ENCODE measurements at regions of chr2 and their contacts with region 1.

Region 1: DNA sequence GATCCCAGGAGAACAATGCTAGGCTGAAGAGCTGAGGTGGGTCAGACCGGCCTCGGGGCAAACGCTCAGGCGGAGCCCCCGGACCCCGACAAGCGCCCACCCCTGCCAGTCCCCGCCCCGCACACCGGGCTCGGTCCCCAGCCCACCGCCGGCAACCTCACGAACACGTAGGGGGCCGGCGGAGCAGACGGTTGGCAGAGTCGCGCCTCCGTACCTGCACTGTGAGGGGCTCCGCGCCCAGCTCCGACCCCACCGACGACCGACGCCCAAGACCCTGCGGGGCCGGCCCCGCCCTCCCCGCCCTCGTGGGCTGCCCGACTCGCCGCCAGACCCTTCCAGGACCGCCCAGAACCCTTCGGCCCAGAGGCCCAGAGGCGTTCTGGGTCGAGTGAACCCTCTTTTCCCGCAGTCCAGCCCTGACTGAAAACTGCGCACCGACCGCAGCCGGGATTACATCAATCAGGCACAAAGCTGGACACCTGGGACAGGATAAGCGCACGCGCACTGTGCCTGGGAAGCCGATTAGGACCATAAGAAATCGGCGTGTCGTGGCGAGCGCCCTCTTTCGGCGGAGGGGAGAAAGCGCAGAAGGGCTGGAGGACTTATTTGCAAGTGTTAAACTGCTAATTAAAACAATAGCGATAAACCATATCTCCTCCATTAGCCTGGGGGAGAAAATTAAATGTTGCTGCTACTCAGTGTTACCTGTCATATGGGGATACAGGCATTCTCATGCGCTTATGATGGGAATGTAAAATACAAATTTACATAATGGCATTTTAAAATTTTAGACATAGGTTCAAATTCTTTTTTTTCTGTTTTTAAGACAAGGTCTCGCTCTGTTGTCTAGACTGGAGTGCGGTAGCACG is 11.7 kb upstream of the DCTN1 start:
- DNase-seq: peak; percentile 98
- ATAC-seq: peak; percentile 78
- H3K4me3 Mint-ChIP-seq: peak overlapping the region; percentile 86
- H3K27ac Mint-ChIP-seq: peak overlapping the region; percentile 99
- H3K4me1 Mint-ChIP-seq: peaks cover 7% of the 10 kb centered on the region
- H3K27me3 Mint-ChIP-seq: no peaks in the 10 kb centered on the region

Region 2: GRCh38 chr2:74267068-74267467 is 124.7 kb before region 1 on chr2:
- CTCF ChIA-PET with region 1: interaction called, 3 read pairs
- POLR2A ChIA-PET with region 1: no interaction called
- intact Hi-C with region 1: loop called in 1 of 2 experiments (anchors 2 kb)
- DNase-seq: peak; percentile 79
- ATAC-seq: peak; percentile 100
- H3K4me3 Mint-ChIP-seq: no peak overlapping the region
- H3K27ac Mint-ChIP-seq: peak overlapping the region; percentile 83
- H3K4me1 Mint-ChIP-seq: peaks cover 9% of the 10 kb centered on the region
- H3K27me3 Mint-ChIP-seq: no peaks in the 10 kb centered on the region

Region 3: GRCh38 chr2:74379851-74380789 is 11.7 kb before region 1 on chr2 and contains the start of gene DCTN1:
- CTCF ChIA-PET with region 1: interaction called, 11 read pairs
- POLR2A ChIA-PET with region 1: no interaction called
- intact Hi-C with region 1: no loop called
- DNase-seq: peak; percentile 52
- ATAC-seq: peak; percentile 82
- H3K4me3 Mint-ChIP-seq: no peak within 1 kb of the TSS
- H3K27ac Mint-ChIP-seq: peak within 1 kb of the TSS; percentile 42
- H3K4me1 Mint-ChIP-seq: peaks cover 24% of the 10 kb centered on the region
- H3K27me3 Mint-ChIP-seq: no peaks in the 10 kb centered on the region
- total RNA-seq, gene DCTN1: 78.1 to 132 TPM

Region 4: GRCh38 chr2:74421221-74421870 is 29.5 kb after region 1 on chr2 and contains the starts of genes C2orf81 and WDR54:
- CTCF ChIA-PET with region 1: interaction called, 9 read pairs
- POLR2A ChIA-PET with region 1: no interaction called
- intact Hi-C with region 1: loop called (anchors 1 to 2 kb)
- DNase-seq: peak; percentile 97
- ATAC-seq: peak; percentile 92
- H3K4me3 Mint-ChIP-seq: peak within 1 kb of the TSS; percentile 91
- H3K27ac Mint-ChIP-seq: peak within 1 kb of the TSS; percentile 98
- H3K4me1 Mint-ChIP-seq: peaks cover 34% of the 10 kb centered on the region
- H3K27me3 Mint-ChIP-seq: no peaks in the 10 kb centered on the region
- total RNA-seq, gene C2orf81: 4.5 to 4.9 TPM
- total RNA-seq, gene WDR54: 103 to 119 TPM

Region 5: DNA sequence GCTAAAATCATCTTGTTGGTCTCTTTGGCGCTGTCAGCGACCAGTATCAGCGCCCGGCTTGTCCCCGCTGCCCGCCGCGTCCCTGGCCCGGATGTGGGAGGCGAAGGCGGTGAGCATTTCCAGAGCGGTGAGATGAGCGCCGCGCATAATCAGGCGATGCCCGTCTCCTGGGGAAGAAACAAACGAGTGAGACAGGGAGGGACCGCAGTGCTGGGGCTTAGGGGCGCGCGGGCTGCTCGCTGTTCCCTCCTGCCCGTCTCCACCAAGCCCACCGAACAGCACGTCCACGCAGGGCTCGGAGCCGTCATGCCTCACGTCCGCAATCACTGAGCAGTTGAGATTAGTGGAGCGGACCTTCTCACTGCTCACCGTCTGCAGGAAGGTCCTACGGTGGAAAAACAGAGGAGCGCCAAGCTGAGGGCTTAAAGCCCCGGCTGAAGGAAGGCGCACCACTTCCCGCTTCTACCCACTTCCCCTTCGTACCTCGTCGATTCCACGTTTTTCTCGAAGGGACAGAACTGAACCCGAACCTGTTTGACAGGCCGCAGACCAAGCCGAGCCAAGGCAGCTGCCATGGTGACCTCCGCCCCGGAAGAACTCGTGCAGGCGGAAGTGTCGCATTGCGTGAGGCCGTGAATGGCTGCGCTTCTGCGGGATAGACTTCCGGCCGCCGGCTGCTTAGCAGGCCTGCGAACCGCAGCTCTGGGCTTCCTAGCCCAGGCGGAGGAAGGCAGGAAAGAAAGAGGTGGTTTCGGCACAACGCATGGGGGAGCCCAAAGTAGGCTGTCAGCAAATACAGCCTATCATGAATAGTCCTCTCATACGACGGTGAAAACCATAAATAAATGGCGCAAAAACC is 80.5 kb after region 1 on chr2 and contains the start of gene MRPL53:
- CTCF ChIA-PET with region 1: interaction called, 3 read pairs
- POLR2A ChIA-PET with region 1: no interaction called
- intact Hi-C with region 1: loop called in 1 of 2 experiments (anchors 1 kb)
- DNase-seq: peak; percentile 97
- ATAC-seq: peak; percentile 92
- H3K4me3 Mint-ChIP-seq: peak within 1 kb of the TSS; percentile 98
- H3K27ac Mint-ChIP-seq: peak within 1 kb of the TSS; percentile 93
- H3K4me1 Mint-ChIP-seq: peaks cover 21% of the 10 kb centered on the region
- H3K27me3 Mint-ChIP-seq: no peaks in the 10 kb centered on the region
- total RNA-seq, gene MRPL53: 87.4 to 88.5 TPM

Region 6: GRCh38 chr2:74587664-74588277 is 196.0 kb after region 1 on chr2:
- CTCF ChIA-PET with region 1: interaction called, 3 read pairs
- POLR2A ChIA-PET with region 1: no interaction called
- intact Hi-C with region 1: loop called in 1 of 2 experiments (anchors 1 kb)
- DNase-seq: peak; percentile 75
- ATAC-seq: peak; percentile 62
- H3K4me3 Mint-ChIP-seq: no peak overlapping the region
- H3K27ac Mint-ChIP-seq: no peak overlapping the region
- H3K4me1 Mint-ChIP-seq: peaks cover 26% of the 10 kb centered on the region
- H3K27me3 Mint-ChIP-seq: peaks cover 3% of the 10 kb centered on the region

Region 7: GRCh38 chr2:74653985-74654882 is 262.4 kb after region 1 on chr2 and contains the start of gene SEMA4F:
- CTCF ChIA-PET with region 1: interaction called, 4 read pairs
- POLR2A ChIA-PET with region 1: no interaction called
- intact Hi-C with region 1: loop called in 1 of 2 experiments (anchors 1 kb)
- DNase-seq: peak; percentile 97
- ATAC-seq: peak; percentile 100
- H3K4me3 Mint-ChIP-seq: peak within 1 kb of the TSS; percentile 76
- H3K27ac Mint-ChIP-seq: peak within 1 kb of the TSS; percentile 49
- H3K4me1 Mint-ChIP-seq: peaks cover 13% of the 10 kb centered on the region
- H3K27me3 Mint-ChIP-seq: peaks cover 7% of the 10 kb centered on the region
- total RNA-seq, gene SEMA4F: 5.7 to 7.4 TPM